B cell (primary cell): ENCODE measurements at regions of chr17 and their contacts with region 1.

Region 1: GRCh38 chr17:59004338-59005111 is 102.2 kb downstream of the TRIM37 start:
- DNase-seq: peak; percentile 81
- ATAC-seq: peak; percentile 37
- H3K4me3 ChIP-seq: no peak overlapping the region
- H3K4me3 Mint-ChIP-seq: peak overlapping the region; percentile 7
- H3K27ac ChIP-seq: peak overlapping the region in 1 of 2 donors; percentile 52
- H3K27ac Mint-ChIP-seq: peak overlapping the region; percentile 72
- H3K4me1 ChIP-seq: peaks cover 16 to 22% of the 10 kb centered on the region in 2 donors
- H3K4me1 Mint-ChIP-seq: peaks cover 28% of the 10 kb centered on the region
- H3K27me3 ChIP-seq: no peaks in the 10 kb centered on the region
- H3K27me3 Mint-ChIP-seq: no peaks in the 10 kb centered on the region
- CTCF ChIP-seq: peak; percentile 99

Region 2: GRCh38 chr17:58531661-58532554 is 472.6 kb before region 1 on chr17:
- CTCF ChIA-PET with region 1: interaction called, 3 read pairs
- POLR2A ChIA-PET with region 1: no interaction called
- intact Hi-C with region 1: loop called (anchors 5 kb)
- DNase-seq: peak; percentile 76
- ATAC-seq: peak; percentile 96
- H3K4me3 ChIP-seq: peak overlapping the region in 4 of 5 experiments; percentile 28 to 63 (median 51)
- H3K4me3 Mint-ChIP-seq: peak overlapping the region; percentile 76
- H3K27ac ChIP-seq: no peak overlapping the region
- H3K27ac Mint-ChIP-seq: no peak overlapping the region
- H3K4me1 ChIP-seq: peaks cover 12 to 13% of the 10 kb centered on the region in 2 donors
- H3K4me1 Mint-ChIP-seq: peaks cover 5% of the 10 kb centered on the region
- H3K27me3 ChIP-seq: peaks cover 0 to 52% (median 15%) of the 10 kb centered on the region in 4 experiments
- H3K27me3 Mint-ChIP-seq: peaks cover 45% of the 10 kb centered on the region
- CTCF ChIP-seq: no peak

Region 3: DNA sequence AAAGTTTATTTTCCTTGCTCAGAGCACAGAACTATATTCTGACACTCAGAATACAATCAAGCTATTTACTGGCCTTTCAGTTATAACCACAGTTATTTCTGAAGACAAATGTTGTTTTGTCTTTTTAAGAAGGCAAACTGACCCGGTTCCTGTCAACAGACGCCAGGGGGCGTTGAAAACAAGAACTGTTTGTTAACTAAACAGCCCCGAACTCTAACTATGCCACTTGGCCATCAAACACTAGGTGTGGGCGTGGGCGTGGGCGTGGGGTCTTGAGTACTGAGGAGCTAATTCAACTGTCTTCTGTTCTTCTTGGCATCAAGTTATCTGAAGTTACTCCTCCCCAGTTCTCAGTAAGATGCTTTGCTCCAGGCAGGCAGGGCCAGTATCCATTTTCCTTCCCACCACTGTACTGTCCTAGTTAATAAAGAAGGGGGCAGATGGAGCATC is 426.9 kb before region 1 on chr17:
- CTCF ChIA-PET with region 1: interaction called, 56 read pairs
- POLR2A ChIA-PET with region 1: no interaction called
- intact Hi-C with region 1: loop called (anchors 2 kb)
- DNase-seq: peak; percentile 66
- ATAC-seq: no peak
- H3K4me3 ChIP-seq: no peak overlapping the region
- H3K4me3 Mint-ChIP-seq: no peak overlapping the region
- H3K27ac ChIP-seq: no peak overlapping the region
- H3K27ac Mint-ChIP-seq: no peak overlapping the region
- H3K4me1 ChIP-seq: no peaks in the 10 kb centered on the region
- H3K4me1 Mint-ChIP-seq: no peaks in the 10 kb centered on the region
- H3K27me3 ChIP-seq: no peaks in the 10 kb centered on the region
- H3K27me3 Mint-ChIP-seq: no peaks in the 10 kb centered on the region
- CTCF ChIP-seq: peak; percentile 75

Region 4: GRCh38 chr17:58631523-58632323 is 372.8 kb before region 1 on chr17:
- CTCF ChIA-PET with region 1: interaction called, 4 read pairs
- POLR2A ChIA-PET with region 1: interaction called, 5 read pairs
- intact Hi-C with region 1: loop called (anchors 1 kb)
- DNase-seq: peak; percentile 97
- ATAC-seq: peak; percentile 82
- H3K4me3 ChIP-seq: peak overlapping the region; percentile 28 to 84 (median 57)
- H3K4me3 Mint-ChIP-seq: no peak overlapping the region
- H3K27ac ChIP-seq: peak overlapping the region; percentile 81 to 99
- H3K27ac Mint-ChIP-seq: no peak overlapping the region
- H3K4me1 ChIP-seq: peaks cover 9% of the 10 kb centered on the region in 2 donors
- H3K4me1 Mint-ChIP-seq: peaks cover 12% of the 10 kb centered on the region
- H3K27me3 ChIP-seq: no peaks in the 10 kb centered on the region
- H3K27me3 Mint-ChIP-seq: no peaks in the 10 kb centered on the region
- CTCF ChIP-seq: peak; percentile 43

Region 5: DNA sequence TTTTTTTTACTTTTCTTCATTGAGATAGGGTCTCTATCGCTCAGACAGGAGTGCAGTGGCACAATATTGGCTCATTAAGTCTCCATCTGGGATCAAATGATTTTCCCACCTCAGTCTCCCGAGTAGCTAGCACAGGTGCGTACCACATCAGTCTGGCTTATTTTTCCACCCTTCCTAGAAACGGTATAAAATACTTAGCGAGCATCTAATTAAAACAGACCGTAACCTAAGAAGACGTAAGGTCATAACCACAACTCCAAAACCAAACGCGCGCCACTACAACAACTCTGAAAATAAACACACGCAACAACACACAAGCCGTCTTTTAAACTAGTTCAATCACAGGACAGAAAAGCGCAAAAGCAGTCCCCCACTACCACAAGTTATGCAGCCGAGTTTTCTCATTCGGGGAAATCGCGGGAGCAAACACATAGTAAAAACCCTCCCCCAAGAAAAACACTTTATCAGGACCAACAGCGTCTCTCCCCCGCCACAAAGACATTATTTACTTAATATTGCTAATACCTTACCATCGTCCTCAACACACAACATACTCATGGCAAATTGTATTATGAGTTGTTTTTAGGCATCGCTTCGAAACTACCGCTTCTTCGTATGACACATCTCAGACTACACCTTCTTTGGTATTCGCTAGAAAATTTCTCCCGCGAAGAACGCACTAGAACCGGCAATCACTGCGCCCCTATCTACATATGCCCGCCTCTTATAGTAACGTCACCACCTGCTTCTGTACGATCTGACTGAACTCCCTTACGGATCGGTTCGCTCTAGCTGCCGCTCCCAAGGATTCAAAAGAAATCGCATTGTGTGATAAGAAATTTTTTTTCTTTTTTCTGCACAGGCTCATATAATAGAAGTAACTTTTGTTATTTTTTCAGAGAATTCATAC is 345.5 kb before region 1 on chr17:
- CTCF ChIA-PET with region 1: interaction called, 5 read pairs
- POLR2A ChIA-PET with region 1: no interaction called
- intact Hi-C with region 1: loop called (anchors 1 kb)
- DNase-seq: peak; percentile 95
- ATAC-seq: peak; percentile 78
- H3K4me3 ChIP-seq: peak overlapping the region; percentile 44 to 82 (median 54)
- H3K4me3 Mint-ChIP-seq: peak overlapping the region; percentile 92
- H3K27ac ChIP-seq: peak overlapping the region; percentile 91 to 97
- H3K27ac Mint-ChIP-seq: peak overlapping the region; percentile 99
- H3K4me1 ChIP-seq: peaks cover 0 to 13% of the 10 kb centered on the region in 2 donors
- H3K4me1 Mint-ChIP-seq: peaks cover 15% of the 10 kb centered on the region
- H3K27me3 ChIP-seq: no peaks in the 10 kb centered on the region
- H3K27me3 Mint-ChIP-seq: no peaks in the 10 kb centered on the region
- CTCF ChIP-seq: no peak

Region 6: DNA sequence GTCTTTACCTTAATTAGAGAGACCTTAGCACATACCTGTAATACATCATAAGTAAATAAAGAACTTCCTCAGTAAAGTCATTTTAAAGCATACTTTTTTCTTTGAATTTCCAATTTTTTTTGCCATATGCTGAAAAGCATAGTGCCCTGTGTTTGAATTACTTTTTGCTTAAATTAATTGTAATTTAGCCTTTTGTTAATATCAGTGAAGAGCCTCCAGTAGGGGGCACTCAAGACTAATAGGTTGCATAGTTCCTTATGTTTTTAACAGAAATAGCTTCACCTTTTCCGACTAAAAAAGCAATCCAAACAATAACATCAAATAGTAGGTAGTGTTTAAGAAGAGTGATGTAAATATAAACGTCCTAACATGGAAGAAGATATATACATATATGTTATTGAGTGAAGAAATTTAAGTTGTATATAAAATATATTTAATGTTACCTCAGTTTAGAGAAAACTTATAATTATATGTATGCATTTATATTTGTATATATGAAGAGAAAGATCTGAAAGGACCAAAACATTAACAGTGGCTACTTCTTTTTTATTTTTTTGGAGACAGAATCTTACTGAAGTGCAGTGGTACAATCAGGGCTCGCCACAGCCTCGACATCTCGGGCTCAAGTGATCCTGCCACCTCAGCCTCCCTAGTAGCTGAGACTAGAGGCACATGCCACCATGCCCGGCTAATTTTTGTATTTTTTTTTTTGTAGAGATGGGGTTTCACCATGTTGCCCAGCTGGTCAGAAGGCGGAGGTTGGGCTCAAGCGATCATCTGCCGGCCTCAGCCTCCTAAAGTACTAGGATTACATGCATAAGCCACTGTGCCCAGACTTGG is 293.4 kb before region 1 on chr17:
- CTCF ChIA-PET with region 1: interaction called, 199 read pairs
- POLR2A ChIA-PET with region 1: interaction called, 4 read pairs
- intact Hi-C with region 1: no loop called
- DNase-seq: peak; percentile 71
- ATAC-seq: no peak
- H3K4me3 ChIP-seq: no peak overlapping the region
- H3K4me3 Mint-ChIP-seq: no peak overlapping the region
- H3K27ac ChIP-seq: no peak overlapping the region
- H3K27ac Mint-ChIP-seq: no peak overlapping the region
- H3K4me1 ChIP-seq: no peaks in the 10 kb centered on the region
- H3K4me1 Mint-ChIP-seq: peaks cover 6% of the 10 kb centered on the region
- H3K27me3 ChIP-seq: no peaks in the 10 kb centered on the region
- H3K27me3 Mint-ChIP-seq: no peaks in the 10 kb centered on the region
- CTCF ChIP-seq: peak; percentile 93

Region 7: GRCh38 chr17:59257101-59257500 is 252.6 kb after region 1 on chr17:
- CTCF ChIA-PET with region 1: no interaction called
- POLR2A ChIA-PET with region 1: no interaction called
- intact Hi-C with region 1: no loop called
- DNase-seq: no peak
- ATAC-seq: no peak
- H3K4me3 ChIP-seq: no peak overlapping the region
- H3K4me3 Mint-ChIP-seq: no peak overlapping the region
- H3K27ac ChIP-seq: no peak overlapping the region
- H3K27ac Mint-ChIP-seq: no peak overlapping the region
- H3K4me1 ChIP-seq: no peaks in the 10 kb centered on the region
- H3K4me1 Mint-ChIP-seq: no peaks in the 10 kb centered on the region
- H3K27me3 ChIP-seq: no peaks in the 10 kb centered on the region
- H3K27me3 Mint-ChIP-seq: no peaks in the 10 kb centered on the region
- CTCF ChIP-seq: no peak